HEK293 (cell line): ENCODE measurements at regions of chr2 and their contacts with region 1.

Region 1: DNA sequence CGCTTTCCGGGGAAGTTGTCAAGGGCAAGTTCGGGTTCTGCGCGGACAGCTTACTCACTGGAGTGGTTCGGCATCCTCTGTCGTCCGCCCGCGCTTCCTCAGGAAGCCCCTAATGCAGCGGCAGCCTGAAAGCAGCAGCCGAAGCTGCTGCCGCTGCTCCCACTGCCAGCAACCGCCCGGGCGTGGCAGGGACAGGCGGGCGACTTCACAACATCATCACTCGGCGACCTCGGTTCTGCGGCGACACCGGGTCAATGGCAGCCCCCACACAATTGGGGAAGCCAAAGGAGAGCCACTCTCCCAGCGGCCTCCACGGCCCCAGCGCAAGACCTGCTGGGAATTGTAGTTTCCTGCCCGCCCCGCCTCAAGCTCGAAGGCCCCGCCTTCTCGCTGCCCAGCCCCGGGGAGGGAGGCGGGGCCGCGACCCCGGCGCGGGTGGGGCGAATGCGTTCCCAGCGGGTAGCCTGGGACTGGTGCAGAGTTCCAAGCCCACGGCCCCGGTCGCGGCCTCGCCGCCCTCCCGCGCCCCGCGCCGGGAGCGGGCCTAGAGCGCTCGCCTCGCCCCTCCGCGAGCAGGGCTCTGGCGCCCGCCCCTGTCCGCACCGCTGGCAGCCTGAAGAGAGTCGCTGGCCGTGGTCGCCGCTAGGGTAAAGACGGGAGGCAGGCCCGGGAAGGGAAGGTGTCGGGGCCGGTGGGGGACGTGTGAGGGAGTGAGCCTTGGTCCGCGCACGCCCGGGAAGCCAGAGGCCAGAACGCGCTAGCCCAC is at the starts of genes STRADB and TRAK2:
- H3K4me3 ChIP-seq: peak within 1 kb of the TSS; percentile 100
- H3K27ac ChIP-seq: peak within 1 kb of the TSS; percentile 84
- H3K4me1 ChIP-seq: peaks cover 9% of the 10 kb centered on the region
- CTCF ChIP-seq: peak; percentile 81

Region 2: GRCh38 chr2:201432038-201432620 is 19.3 kb before region 1 on chr2:
- CTCF ChIA-PET with region 1: no interaction called
- POLR2A ChIA-PET with region 1: interaction called, 12 read pairs
- H3K4me3 ChIP-seq: no peak overlapping the region
- H3K27ac ChIP-seq: no peak overlapping the region
- H3K4me1 ChIP-seq: peaks cover 6% of the 10 kb centered on the region
- CTCF ChIP-seq: no peak

Region 3: DNA sequence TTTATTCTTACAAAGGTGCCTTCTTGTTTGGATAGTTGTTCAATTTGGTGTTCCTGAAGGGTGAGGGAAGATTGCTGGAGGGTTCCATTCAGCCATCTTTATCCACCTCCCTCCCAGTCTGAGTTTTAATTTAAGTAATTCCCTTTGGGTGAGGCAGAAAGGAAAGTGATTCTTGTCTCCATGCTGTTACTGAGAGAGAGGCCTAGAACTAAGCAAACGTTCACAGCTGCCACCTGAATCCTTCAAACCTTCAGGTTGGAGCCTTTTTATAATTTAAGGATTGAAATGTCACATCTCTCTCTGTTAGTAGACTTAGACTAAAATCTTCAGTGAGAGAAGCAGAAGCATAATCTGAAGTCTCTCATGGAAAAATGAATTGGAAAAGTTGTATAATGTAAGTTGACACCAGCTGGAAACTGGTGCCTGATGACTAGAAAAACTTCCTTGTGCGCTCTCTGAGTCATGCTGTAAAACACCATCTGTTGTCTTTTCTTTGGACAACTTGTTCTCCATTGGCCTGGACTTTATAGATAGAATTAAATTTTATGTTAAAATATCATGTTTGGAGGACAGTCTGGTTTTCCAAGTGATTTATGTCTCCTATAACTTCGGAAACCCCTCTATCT is 14.7 kb after region 1 on chr2:
- CTCF ChIA-PET with region 1: no interaction called
- POLR2A ChIA-PET with region 1: interaction called, 11 read pairs
- H3K4me3 ChIP-seq: no peak overlapping the region
- H3K27ac ChIP-seq: no peak overlapping the region
- H3K4me1 ChIP-seq: peaks cover 2% of the 10 kb centered on the region; the same call in 1 of the 2 replicates
- CTCF ChIP-seq: no peak

Region 4: GRCh38 chr2:201517094-201517493 is 65.6 kb after region 1 on chr2:
- CTCF ChIA-PET with region 1: no interaction called
- POLR2A ChIA-PET with region 1: no interaction called
- H3K4me3 ChIP-seq: no peak overlapping the region
- H3K27ac ChIP-seq: no peak overlapping the region
- H3K4me1 ChIP-seq: no peaks in the 10 kb centered on the region
- CTCF ChIP-seq: no peak